Motor neuron (in vitro differentiated cells): ENCODE measurements at regions of chr18 and their contacts with region 1.

Region 1: GRCh38 chr18:40529478-40529877 is 1425.6 kb upstream of the PIK3C3 start:
- ATAC-seq: peak in 2 of 8 experiments; percentile 40 to 53
- H3K4me3 ChIP-seq: no peak overlapping the region
- H3K27ac ChIP-seq: no peak overlapping the region
- H3K4me1 ChIP-seq: peaks cover 0 to 2% of the 10 kb centered on the region in 2 donors

Region 2: DNA sequence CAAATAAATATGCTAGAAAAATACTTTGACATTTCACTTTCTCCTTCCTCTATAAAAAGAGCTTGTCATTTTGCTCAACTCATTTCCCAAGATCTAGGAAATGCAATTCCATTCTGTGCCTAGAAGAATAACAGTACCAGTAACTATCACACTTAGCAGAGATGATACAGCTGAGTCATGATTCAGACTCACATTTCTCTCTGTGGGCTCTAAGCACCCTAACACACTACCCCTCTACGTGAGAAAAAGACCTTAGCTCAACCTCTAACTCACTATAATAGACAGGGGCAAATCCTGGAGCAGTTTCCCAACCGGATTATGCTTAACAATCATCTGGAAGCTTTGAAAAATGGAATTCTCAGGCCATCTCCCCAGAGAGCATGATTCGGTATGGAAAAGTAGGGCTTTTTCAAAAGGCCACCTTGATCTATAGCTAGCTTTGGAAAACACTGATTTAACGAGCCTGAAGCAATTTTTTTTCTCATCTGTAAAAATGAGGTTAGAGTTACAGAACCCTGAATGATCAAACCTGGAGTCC is 113.3 kb after region 1 on chr18:
- in situ Hi-C with region 1: loop called in 1 of 9 experiments (anchors 25 kb)
- ATAC-seq: peak in 6 of 8 experiments; percentile 20 to 98 (median 77)
- H3K4me3 ChIP-seq: no peak overlapping the region
- H3K27ac ChIP-seq: no peak overlapping the region
- H3K4me1 ChIP-seq: peaks cover 0 to 5% of the 10 kb centered on the region in 2 donors